A673 (cell line): ENCODE measurements at regions of chr5 and their contacts with region 1.

Region 1: GRCh38 chr5:180353048-180353979 is at the start of gene GFPT2:
- DNase-seq: peak; percentile 81
- H3K4me3 ChIP-seq: peak within 1 kb of the TSS; percentile 55
- H3K27ac ChIP-seq: no peak within 1 kb of the TSS
- H3K4me1 ChIP-seq: peaks cover 5% of the 10 kb centered on the region
- H3K27me3 ChIP-seq: peaks cover 25% of the 10 kb centered on the region
- CTCF ChIP-seq: no peak
- total RNA-seq, gene GFPT2: 0.82 and 1.2 TPM in 2 replicates

Region 2: DNA sequence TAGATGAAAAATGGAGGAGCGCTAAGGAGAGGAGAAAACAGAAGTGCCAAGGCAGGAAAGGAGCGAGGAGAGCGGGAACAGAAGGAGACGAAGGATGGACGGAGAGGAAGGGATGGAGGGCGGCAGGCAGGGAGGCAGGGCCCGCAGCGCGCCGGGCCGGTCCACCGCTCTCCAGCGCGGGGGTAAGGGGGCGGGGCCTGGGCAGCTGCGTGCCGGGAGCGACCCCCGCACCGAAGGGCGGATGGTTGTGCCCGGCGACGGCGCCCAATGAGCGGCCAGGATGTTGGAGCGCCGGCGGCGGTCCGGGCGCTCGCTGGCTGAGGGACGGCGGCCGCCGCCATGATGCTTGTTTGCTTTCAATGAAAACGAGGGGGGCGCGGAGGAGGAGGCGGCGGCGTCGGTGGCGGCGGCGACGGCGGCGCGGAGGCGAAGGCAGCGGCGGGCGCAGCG is 140.8 kb after region 1 on chr5 and contains the start of gene CNOT6:
- CTCF ChIA-PET with region 1: no interaction called
- POLR2A ChIA-PET with region 1: no interaction called
- intact Hi-C with region 1: loop called (anchors 5 kb)
- DNase-seq: peak; percentile 91
- H3K4me3 ChIP-seq: peak within 1 kb of the TSS; percentile 98
- H3K27ac ChIP-seq: peak within 1 kb of the TSS; percentile 98
- H3K4me1 ChIP-seq: peaks cover 18% of the 10 kb centered on the region
- H3K27me3 ChIP-seq: no peaks in the 10 kb centered on the region
- CTCF ChIP-seq: no peak
- total RNA-seq, gene CNOT6: 60.9 and 61.6 TPM in 2 replicates